ENCODE measurements at regions of chr6 and their contacts with region 1.

Region 1: DNA sequence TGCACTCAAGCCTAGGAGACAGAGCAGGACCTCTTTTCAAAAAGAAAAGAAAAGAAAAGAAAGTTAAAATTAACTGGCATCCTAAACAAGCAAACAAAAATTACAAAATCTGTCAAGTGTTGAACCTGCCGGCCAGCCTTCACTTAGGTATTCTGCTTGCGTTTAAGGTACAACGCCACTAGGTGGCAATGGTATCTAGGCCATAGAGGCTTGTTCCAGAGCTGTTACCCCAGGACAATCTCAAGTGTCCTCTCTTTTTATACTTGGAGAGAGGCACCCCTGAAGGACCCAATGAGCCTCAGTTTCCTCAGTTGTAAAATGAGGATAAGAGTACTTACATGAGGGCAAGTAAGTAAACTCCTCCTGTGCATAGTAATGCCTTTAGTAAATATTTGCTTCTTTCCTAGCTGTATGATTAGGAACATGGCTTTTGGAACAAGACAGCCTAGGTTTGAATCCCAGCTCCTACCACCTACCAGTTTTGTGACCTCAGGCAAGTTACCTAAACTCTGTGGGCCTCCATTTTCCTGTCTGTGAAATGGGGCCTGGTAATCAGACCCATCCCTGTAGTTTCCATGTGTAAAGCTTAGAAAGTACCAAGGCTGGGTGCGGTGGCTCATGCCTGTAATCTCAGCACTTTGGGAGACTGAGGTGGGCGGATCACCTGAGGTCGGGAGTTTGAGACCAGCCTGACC is 5.8 kb upstream of the PACSIN1 start:
- DNase-seq: peak; percentile 24
- ATAC-seq: peak; percentile 87
- H3K4me3 ChIP-seq: no peak overlapping the region
- H3K27ac ChIP-seq: no peak overlapping the region
- H3K4me1 ChIP-seq: no peaks in the 10 kb centered on the region; the same call in 1 of the 2 replicates
- H3K27me3 ChIP-seq: no peaks in the 10 kb centered on the region
- CTCF ChIP-seq: peak; percentile 69 to 83 (median 77)
- EP300 ChIP-seq: no peak
- POLR2A ChIP-seq: no peak
- RAD21 ChIP-seq: peak; percentile 95

Region 2: DNA sequence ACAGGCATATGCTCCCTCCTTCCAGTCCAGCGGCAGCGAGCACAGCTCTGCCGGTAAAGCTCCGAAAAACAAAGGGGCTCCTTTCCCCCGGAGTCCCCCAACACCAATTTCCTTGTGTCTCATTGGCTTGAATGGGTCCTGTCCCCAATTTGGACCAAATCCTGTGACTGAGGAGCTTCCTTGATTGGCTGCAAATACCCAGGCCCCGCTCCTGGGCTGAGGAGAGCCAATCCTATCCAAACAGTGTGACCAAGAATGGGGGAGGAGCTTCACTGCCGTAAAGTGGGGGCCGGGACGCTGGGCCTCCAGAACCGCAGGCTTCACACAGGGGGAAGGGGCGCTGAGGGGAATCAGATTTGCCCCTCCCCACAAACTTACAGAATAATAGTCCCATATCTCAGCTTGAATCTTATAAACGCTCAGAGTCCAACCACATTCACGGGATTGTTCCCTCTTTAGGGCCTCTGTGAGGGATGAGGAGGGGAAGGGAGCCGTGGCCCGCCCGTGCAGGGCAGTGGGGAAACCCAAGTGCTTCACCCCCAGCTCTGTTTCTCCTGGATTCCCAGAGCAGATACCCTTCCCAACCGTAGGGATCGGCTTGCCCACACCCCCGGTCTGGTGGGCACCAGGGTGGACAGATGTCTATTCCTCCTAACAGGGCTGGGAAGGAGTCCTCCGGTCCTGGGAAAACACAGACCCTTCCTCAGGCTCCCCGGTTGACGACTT is 515.2 kb before region 1 on chr6:
- CTCF ChIA-PET with region 1: no interaction called
- POLR2A ChIA-PET with region 1: no interaction called
- RAD21 ChIA-PET with region 1: no interaction called
- SMC1A ChIA-PET with region 1: no interaction called
- in situ Hi-C with region 1: no loop called
- intact Hi-C with region 1: no loop called
- DNase-seq: no peak
- ATAC-seq: no peak
- H3K4me3 ChIP-seq: no peak overlapping the region
- H3K27ac ChIP-seq: no peak overlapping the region
- H3K4me1 ChIP-seq: no peaks in the 10 kb centered on the region
- H3K27me3 ChIP-seq: peaks cover 0 to 8% of the 10 kb centered on the region in 2 experiments; a peak in 3 of 4 replicates
- CTCF ChIP-seq: no peak
- EP300 ChIP-seq: no peak
- POLR2A ChIP-seq: no peak
- RAD21 ChIP-seq: no peak

Region 3: DNA sequence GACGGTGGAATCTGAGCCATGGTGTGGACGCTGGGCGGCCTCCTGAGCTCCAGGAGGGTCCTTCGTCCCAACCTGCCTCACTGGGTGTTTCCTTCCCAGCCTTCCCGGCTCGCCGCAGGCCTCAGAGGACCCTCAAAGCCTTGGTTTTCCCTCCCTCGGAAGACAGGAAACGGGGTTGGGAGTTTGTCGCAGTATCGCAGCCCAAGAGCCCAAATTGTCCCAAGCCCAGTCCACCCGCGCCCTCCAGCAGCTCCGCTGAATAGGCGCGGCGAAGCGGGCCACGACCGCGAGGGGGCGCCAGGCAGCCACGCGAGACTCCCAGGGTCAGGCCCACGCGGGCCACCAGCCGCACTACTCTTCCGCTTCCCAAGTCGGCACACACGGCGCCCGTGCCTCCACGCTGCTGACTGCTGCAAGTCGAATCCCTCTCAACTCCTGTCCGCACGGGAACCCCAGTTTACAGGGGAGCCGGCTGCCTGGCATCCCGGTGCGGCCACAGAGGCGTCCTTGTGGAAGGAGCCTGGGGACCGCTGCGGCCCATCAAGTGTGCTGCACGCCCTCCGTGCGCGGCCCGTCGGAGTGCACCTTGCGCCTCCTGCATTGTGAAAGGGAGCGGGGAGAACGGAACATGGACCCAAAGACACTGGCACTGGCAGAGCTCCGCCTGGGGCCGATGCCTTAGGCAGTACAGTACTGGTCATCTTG is 263.8 kb before region 1 on chr6:
- CTCF ChIA-PET with region 1: interaction called, 16 read pairs
- POLR2A ChIA-PET with region 1: no interaction called
- RAD21 ChIA-PET with region 1: no interaction called
- SMC1A ChIA-PET with region 1: no interaction called
- in situ Hi-C with region 1: no loop called
- intact Hi-C with region 1: no loop called
- DNase-seq: peak; percentile 28
- ATAC-seq: peak; percentile 99
- H3K4me3 ChIP-seq: peak overlapping the region; percentile 64
- H3K27ac ChIP-seq: no peak overlapping the region
- H3K4me1 ChIP-seq: peaks cover 8% of the 10 kb centered on the region
- H3K27me3 ChIP-seq: peaks cover 0 to 2% of the 10 kb centered on the region in 2 experiments; a peak in 1 of 4 replicates
- CTCF ChIP-seq: peak; percentile 94 to 98 (median 96)
- EP300 ChIP-seq: 0 out of 4 replicates have a peak, but pooled peaks of 1 of the 2 experiments have one; percentile 42
- POLR2A ChIP-seq: peak; percentile 77
- RAD21 ChIP-seq: peak; percentile 86

Region 4: DNA sequence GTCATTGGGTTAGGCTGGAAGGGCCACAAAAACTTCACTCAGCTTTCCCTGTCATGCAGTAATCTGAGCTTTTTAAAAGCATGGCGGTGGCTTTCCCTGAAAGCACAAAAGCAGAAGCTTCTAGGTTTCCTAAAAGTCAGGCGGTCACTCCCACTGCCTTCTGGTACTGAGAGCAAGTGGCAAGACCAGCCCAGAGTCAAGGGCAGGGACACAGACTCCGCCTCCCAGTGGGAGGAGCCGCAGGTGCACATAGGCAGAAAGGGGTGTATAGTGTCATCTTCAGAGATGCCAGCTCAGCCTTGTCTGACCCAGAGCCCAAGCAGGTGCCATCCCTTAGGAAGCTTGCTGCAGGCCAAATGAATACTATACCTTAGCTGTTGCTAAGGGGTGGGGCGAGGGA is 12.1 kb before region 1 on chr6:
- CTCF ChIA-PET with region 1: interaction called, 11 read pairs
- POLR2A ChIA-PET with region 1: no interaction called
- RAD21 ChIA-PET with region 1: interaction called, 3 read pairs
- SMC1A ChIA-PET with region 1: interaction called, 4 read pairs
- in situ Hi-C with region 1: no loop called
- intact Hi-C with region 1: no loop called
- DNase-seq: no peak
- ATAC-seq: peak; percentile 75
- H3K4me3 ChIP-seq: no peak overlapping the region
- H3K27ac ChIP-seq: no peak overlapping the region
- H3K4me1 ChIP-seq: no peaks in the 10 kb centered on the region
- H3K27me3 ChIP-seq: no peaks in the 10 kb centered on the region
- CTCF ChIP-seq: no peak
- EP300 ChIP-seq: no peak
- POLR2A ChIP-seq: no peak
- RAD21 ChIP-seq: no peak

Region 5: GRCh38 chr6:34526992-34527728 is 67.1 kb after region 1 on chr6:
- CTCF ChIA-PET with region 1: interaction called, 27 read pairs
- POLR2A ChIA-PET with region 1: no interaction called
- RAD21 ChIA-PET with region 1: interaction called, 10 read pairs
- SMC1A ChIA-PET with region 1: interaction called, 7 read pairs
- in situ Hi-C with region 1: no loop called
- intact Hi-C with region 1: no loop called
- DNase-seq: peak; percentile 54
- ATAC-seq: peak; percentile 99
- H3K4me3 ChIP-seq: no peak overlapping the region
- H3K27ac ChIP-seq: no peak overlapping the region
- H3K4me1 ChIP-seq: no peaks in the 10 kb centered on the region
- H3K27me3 ChIP-seq: no peaks in the 10 kb centered on the region
- CTCF ChIP-seq: peak; percentile 49 to 82 (median 77)
- EP300 ChIP-seq: no peak
- POLR2A ChIP-seq: 0 out of 2 replicates have a peak, but pooled peaks have one; percentile 38
- RAD21 ChIP-seq: peak; percentile 40; the same call in 1 of the 2 replicates

Region 6: GRCh38 chr6:34610819-34611477 is 150.9 kb after region 1 on chr6:
- CTCF ChIA-PET with region 1: interaction called, 198 read pairs
- POLR2A ChIA-PET with region 1: no interaction called
- RAD21 ChIA-PET with region 1: interaction called, 99 read pairs
- SMC1A ChIA-PET with region 1: interaction called, 124 read pairs
- in situ Hi-C with region 1: loop called (anchors 5 kb)
- intact Hi-C with region 1: loop called (anchors 1 kb)
- DNase-seq: no peak
- ATAC-seq: no peak
- H3K4me3 ChIP-seq: no peak overlapping the region
- H3K27ac ChIP-seq: no peak overlapping the region
- H3K4me1 ChIP-seq: peaks cover 3% of the 10 kb centered on the region; the same call in 1 of the 2 replicates
- H3K27me3 ChIP-seq: no peaks in the 10 kb centered on the region
- CTCF ChIP-seq: no peak
- EP300 ChIP-seq: no peak
- POLR2A ChIP-seq: no peak
- RAD21 ChIP-seq: no peak

Region 7: GRCh38 chr6:35139908-35140655 is 680.0 kb after region 1 on chr6:
- CTCF ChIA-PET with region 1: interaction called, 29 read pairs
- POLR2A ChIA-PET with region 1: no interaction called
- RAD21 ChIA-PET with region 1: interaction called, 16 read pairs
- SMC1A ChIA-PET with region 1: interaction called, 17 read pairs
- in situ Hi-C with region 1: loop called (anchors 10 kb)
- intact Hi-C with region 1: loop called (anchors 5 kb)
- DNase-seq: peak; percentile 32
- ATAC-seq: peak; percentile 74
- H3K4me3 ChIP-seq: no peak overlapping the region
- H3K27ac ChIP-seq: no peak overlapping the region
- H3K4me1 ChIP-seq: peaks cover 3% of the 10 kb centered on the region; the same call in 1 of the 2 replicates
- H3K27me3 ChIP-seq: no peaks in the 10 kb centered on the region
- CTCF ChIP-seq: peak; percentile 68 to 89 (median 77)
- EP300 ChIP-seq: no peak
- POLR2A ChIP-seq: no peak
- RAD21 ChIP-seq: peak; percentile 95